Heart right ventricle (tissue), 16 donors: ENCODE measurements at regions of chr1 and their contacts with region 1.

Region 1: DNA sequence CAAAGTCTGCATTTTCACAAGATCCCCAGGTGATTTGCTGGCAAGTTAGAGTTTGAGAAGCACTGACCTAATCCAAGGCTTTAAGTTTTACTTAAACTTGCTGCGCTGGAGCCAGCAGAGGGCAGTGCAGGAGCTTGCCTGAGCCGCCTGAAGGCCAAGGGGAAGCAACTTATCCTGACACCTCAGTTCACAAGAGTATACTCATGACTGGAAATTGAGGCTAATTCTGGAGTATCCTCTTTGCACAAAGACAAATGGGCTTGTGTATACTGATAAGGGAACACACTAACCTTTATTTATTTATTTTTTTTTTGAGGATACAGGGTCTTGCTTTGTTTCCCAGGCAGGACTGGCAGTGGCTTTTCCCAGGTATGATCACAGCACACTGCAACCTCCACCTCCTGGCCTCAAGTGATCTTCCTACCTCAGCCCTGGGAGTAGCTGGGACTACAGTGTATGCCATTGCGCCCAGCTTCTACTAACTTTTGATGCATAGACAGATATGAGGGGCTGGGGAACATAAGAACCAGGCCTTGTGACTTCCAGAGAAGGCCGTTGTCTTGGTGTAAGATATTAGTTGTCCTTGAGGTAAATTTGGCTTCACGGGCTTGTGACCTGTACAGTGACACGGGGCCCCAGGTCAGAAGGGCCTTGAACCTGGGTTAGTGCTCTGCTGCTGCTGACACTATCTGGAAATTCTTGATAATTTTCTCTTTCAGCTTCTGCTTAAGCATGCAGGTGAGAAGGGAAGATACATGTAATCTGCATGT is 29.0 kb upstream of the SLAMF1 start:
- DNase-seq: peak; percentile 64 to 65
- ATAC-seq: peak; percentile 47 to 84 (median 80)
- H3K4me3 ChIP-seq: no peak overlapping the region
- H3K27ac ChIP-seq: peak overlapping the region in 1 of 10 donors; percentile 49
- H3K4me1 ChIP-seq: peaks cover 0 to 36% (median 0%) of the 10 kb centered on the region in 9 donors
- H3K27me3 ChIP-seq: peaks cover 0 to 36% (median 7%) of the 10 kb centered on the region in 7 donors
- CTCF ChIP-seq: peak; percentile 38 to 86 (median 77)

Region 2: GRCh38 chr1:160610569-160611242 is 65.1 kb before region 1 on chr1:
- intact Hi-C with region 1: no loop called
- DNase-seq: no peak
- ATAC-seq: no peak
- H3K4me3 ChIP-seq: no peak overlapping the region
- H3K27ac ChIP-seq: no peak overlapping the region
- H3K4me1 ChIP-seq: peaks cover 0 to 12% (median 0%) of the 10 kb centered on the region in 9 donors
- H3K27me3 ChIP-seq: peaks cover 0 to 44% (median 4%) of the 10 kb centered on the region in 7 donors
- CTCF ChIP-seq: no peak

Region 3: GRCh38 chr1:160623227-160623633 is 52.6 kb before region 1 on chr1:
- intact Hi-C with region 1: loop called in 1 of 10 experiments (anchors 5 kb)
- DNase-seq: no peak
- ATAC-seq: no peak
- H3K4me3 ChIP-seq: no peak overlapping the region
- H3K27ac ChIP-seq: peak overlapping the region in 1 of 10 donors; percentile 42
- H3K4me1 ChIP-seq: peaks cover 0 to 47% (median 0%) of the 10 kb centered on the region in 9 donors
- H3K27me3 ChIP-seq: peaks cover 0 to 4% (median 0%) of the 10 kb centered on the region in 7 donors
- CTCF ChIP-seq: no peak

Region 4: GRCh38 chr1:160704250-160704649 is 28.4 kb after region 1 on chr1:
- intact Hi-C with region 1: no loop called
- DNase-seq: no peak
- ATAC-seq: peak in 7 of 8 donors; percentile 51 to 85 (median 73)
- H3K4me3 ChIP-seq: no peak overlapping the region
- H3K27ac ChIP-seq: peak overlapping the region in 1 of 10 donors; percentile 90
- H3K4me1 ChIP-seq: peaks cover 0 to 74% (median 0%) of the 10 kb centered on the region in 9 donors
- H3K27me3 ChIP-seq: peaks cover 0 to 9% (median 0%) of the 10 kb centered on the region in 7 donors
- CTCF ChIP-seq: no peak

Region 5: GRCh38 chr1:160777486-160778089 is 101.8 kb after region 1 on chr1:
- intact Hi-C with region 1: no loop called
- DNase-seq: no peak
- ATAC-seq: no peak
- H3K4me3 ChIP-seq: no peak overlapping the region
- H3K27ac ChIP-seq: no peak overlapping the region
- H3K4me1 ChIP-seq: peaks cover 0 to 2% (median 0%) of the 10 kb centered on the region in 9 donors
- H3K27me3 ChIP-seq: peaks cover 0 to 19% (median 11%) of the 10 kb centered on the region in 7 donors
- CTCF ChIP-seq: peak in 6 of 9 donors; percentile 13 to 54 (median 25)

Region 6: GRCh38 chr1:160830321-160831153 is 154.7 kb after region 1 on chr1:
- intact Hi-C with region 1: loop called in 4 of 10 experiments (anchors 2 to 10 kb)
- DNase-seq: peak; percentile 21 to 39
- ATAC-seq: peak in 2 of 8 donors; percentile 27 to 31
- H3K4me3 ChIP-seq: no peak overlapping the region
- H3K27ac ChIP-seq: no peak overlapping the region
- H3K4me1 ChIP-seq: no peaks in the 10 kb centered on the region
- H3K27me3 ChIP-seq: peaks cover 0 to 20% (median 0%) of the 10 kb centered on the region in 7 donors
- CTCF ChIP-seq: peak in 7 of 9 donors; percentile 33 to 62 (median 53)

Region 7: GRCh38 chr1:160911441-160911840 is 235.6 kb after region 1 on chr1:
- intact Hi-C with region 1: no loop called
- DNase-seq: no peak
- ATAC-seq: peak in 2 of 8 donors; percentile 37 to 49
- H3K4me3 ChIP-seq: no peak overlapping the region
- H3K27ac ChIP-seq: no peak overlapping the region
- H3K4me1 ChIP-seq: peaks cover 0 to 32% (median 7%) of the 10 kb centered on the region in 9 donors
- H3K27me3 ChIP-seq: peaks cover 0 to 13% (median 0%) of the 10 kb centered on the region in 7 donors
- CTCF ChIP-seq: no peak